ENCODE measurements at regions of chr6 and their contacts with region 1.

Region 1: DNA sequence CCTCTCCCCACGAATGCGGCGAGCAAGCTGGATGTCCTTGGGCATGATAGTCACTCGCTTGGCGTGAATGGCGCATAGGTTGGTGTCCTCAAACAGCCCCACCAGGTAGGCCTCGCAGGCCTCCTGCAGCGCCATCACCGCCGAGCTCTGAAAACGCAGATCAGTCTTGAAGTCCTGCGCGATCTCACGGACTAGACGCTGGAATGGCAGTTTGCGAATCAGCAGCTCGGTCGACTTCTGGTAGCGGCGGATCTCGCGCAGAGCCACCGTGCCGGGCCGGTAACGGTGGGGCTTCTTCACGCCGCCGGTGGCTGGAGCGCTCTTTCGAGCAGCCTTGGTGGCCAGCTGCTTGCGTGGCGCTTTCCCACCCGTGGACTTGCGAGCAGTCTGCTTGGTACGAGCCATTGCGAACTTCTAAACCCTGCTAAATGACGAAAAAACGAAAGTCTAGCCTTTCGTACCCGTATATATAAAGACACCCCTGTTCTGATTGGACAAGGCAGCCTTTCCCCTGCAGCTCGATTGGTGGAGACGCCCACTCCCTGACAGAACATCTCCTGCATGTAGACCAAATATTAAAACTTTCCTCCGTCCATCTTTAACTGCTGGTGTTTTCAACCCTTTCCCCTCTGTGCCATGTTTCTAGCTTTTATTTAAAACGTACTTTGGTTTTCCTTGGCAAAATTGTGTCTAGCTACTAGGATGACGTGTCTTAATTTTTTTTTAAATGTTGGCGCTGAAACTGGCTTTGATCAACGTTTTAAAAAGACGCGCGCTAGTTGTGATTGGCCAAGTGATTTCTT is 109.8 kb downstream of the HFE start:
- DNase-seq: peak; percentile 84
- H3K4me3 Mint-ChIP-seq: peak overlapping the region; percentile 97
- H3K27ac Mint-ChIP-seq: peak overlapping the region; percentile 97
- H3K4me1 Mint-ChIP-seq: peaks cover 43% of the 10 kb centered on the region
- H3K27me3 Mint-ChIP-seq: no peaks in the 10 kb centered on the region

Region 2: DNA sequence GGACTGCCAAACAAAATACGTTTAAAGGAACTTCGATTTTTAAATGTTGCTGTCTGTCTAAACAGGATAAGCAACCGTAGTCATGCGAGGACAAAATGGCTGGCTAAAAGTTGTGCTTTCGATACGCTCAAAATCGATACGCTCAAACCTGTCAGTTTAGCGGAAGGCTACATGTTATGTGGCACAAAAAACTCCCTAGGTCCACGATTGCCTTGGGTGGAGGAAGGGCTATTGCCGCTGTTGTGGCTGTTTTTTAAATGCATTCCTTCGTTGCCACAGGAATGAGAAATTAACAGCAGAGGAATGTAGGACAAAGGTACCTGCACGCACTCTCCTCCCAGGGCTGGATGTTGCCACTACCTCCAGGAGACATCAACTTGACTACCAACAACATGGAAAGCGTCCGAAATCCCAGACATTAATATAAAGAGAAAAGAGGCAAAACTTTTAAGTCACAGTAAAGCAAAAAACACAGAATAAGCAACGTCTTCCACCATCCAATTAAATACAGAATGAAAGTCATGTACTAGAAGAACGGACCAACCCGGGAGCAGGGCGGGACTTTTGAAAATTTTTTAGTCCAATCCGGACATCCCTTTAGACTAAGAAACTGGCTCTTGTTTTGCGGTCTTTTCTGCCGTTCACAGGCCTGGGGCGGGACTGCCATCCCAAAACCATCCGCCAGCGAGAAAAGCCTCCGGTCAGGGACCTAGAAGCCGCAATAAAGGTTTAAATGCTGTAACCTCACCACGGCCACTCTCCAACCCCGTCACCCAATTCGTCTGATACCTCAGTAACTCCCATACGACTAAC is 142.0 kb before region 1 on chr6:
- intact Hi-C with region 1: loop called (anchors 2 kb)
- DNase-seq: peak; percentile 85
- H3K4me3 Mint-ChIP-seq: peak overlapping the region; percentile 90
- H3K27ac Mint-ChIP-seq: peak overlapping the region; percentile 99
- H3K4me1 Mint-ChIP-seq: peaks cover 33% of the 10 kb centered on the region
- H3K27me3 Mint-ChIP-seq: no peaks in the 10 kb centered on the region

Region 3: DNA sequence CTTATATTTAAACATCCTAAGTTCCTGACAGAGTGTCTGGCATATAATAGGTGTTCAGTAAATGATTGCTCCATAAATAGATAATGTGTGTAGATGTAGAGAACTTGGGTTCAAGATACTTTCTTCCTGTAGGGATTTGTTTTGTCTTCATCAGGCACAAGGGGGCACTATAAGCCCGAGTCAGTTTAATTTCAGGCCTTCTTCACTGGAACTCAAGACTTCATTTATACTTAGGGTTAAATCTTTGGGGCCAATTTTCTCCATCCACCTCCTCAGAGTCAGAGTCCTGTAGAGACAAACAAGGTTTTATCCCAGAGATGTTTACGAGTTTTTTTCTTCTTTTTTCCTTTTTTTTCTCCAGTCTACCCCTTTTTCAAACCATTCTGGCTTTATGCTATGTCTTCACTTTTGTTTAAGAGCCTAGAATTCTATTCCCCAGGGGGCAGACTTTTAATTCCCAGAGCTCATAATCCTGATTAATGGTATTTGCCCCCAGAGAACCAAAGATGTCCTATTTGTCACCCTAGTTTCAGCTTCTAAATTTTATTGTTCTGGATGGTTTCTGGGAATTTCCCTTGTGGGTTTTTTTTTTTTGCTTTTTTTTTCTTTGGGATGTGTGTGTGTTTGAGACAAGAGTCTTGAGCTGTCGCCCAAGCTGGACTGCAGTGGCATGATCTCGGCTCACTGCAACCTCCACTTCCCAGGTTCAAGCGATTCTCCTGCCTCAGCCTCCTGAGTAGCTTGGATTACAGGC is 21.4 kb before region 1 on chr6:
- intact Hi-C with region 1: loop called (anchors 1 kb)
- DNase-seq: peak; percentile 52
- H3K4me3 Mint-ChIP-seq: peak overlapping the region; percentile 56
- H3K27ac Mint-ChIP-seq: peak overlapping the region; percentile 63
- H3K4me1 Mint-ChIP-seq: peaks cover 45% of the 10 kb centered on the region
- H3K27me3 Mint-ChIP-seq: no peaks in the 10 kb centered on the region

Region 4: GRCh38 chr6:26216356-26216885 is 19.4 kb after region 1 on chr6:
- intact Hi-C with region 1: loop called (anchors 1 kb)
- DNase-seq: peak; percentile 87
- H3K4me3 Mint-ChIP-seq: no peak overlapping the region
- H3K27ac Mint-ChIP-seq: no peak overlapping the region
- H3K4me1 Mint-ChIP-seq: peaks cover 24% of the 10 kb centered on the region
- H3K27me3 Mint-ChIP-seq: no peaks in the 10 kb centered on the region

Region 5: DNA sequence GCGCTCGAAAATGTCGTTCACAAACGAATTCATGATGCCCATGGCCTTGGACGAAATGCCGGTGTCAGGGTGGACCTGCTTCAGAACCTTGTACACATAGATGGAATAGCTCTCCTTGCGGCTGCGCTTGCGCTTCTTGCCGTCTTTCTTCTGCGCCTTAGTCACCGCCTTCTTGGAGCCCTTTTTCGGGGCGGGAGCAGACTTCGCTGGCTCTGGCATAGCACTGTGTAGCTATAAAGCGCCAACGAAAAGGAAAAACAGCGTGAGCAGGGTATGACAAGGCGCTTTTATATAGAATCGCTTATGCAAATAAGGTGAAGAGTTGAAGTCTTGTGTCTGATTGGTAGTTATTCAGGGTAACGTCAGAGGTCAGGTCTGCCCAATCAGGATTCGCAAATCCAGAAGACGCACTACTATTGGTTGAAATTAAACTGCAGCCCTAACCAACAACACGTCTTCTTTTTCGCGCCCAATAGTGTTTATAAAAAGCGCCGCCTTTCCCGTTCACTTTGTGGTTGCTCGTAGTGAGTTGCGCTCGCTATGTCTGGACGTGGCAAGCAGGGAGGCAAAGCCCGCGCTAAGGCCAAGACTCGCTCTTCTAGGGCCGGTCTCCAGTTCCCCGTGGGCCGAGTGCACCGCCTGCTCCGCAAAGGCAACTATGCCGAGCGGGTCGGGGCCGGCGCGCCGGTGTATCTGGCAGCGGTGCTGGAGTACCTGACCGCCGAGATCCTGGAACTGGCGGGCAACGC is 935.7 kb after region 1 on chr6:
- intact Hi-C with region 1: loop called (anchors 5 kb)
- DNase-seq: peak; percentile 95
- H3K4me3 Mint-ChIP-seq: no peak overlapping the region
- H3K27ac Mint-ChIP-seq: no peak overlapping the region
- H3K4me1 Mint-ChIP-seq: peaks cover 38% of the 10 kb centered on the region
- H3K27me3 Mint-ChIP-seq: no peaks in the 10 kb centered on the region

Region 6: DNA sequence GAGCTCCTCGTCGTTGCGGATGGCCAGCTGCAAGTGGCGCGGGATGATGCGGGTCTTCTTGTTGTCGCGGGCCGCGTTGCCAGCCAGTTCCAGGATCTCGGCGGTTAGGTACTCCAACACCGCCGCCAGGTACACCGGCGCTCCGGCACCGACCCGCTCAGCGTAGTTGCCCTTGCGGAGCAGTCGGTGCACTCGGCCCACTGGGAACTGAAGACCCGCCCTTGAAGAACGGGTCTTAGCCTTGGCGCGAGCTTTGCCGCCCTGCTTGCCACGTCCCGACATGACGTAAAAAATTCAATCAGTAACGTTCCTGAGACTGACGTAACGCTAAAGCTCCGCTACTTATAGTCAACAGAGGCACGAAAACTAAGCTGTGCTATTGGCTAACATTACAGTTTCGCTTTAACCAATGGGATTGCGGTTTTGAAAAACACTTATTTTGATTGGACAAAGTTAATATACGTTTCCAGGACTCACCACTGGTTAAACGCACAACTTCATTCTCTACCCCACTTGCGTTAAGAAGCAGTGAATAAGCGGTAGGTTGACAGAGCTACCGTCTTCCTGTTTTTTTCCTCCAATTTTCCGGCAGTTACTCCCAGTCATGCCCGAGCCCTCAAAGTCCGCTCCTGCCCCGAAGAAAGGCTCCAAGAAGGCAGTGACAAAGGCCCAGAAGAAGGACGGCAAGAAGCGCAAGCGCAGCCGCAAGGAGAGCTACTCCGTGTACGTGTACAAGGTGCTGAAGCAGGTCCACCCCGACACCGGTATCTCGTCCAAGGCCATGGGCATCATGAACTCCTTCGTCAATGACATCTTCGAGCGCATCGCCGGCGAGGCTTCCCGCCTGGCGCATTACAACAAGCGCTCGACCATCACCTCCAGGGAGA is 1641.3 kb after region 1 on chr6:
- intact Hi-C with region 1: loop called (anchors 10 kb)
- DNase-seq: peak; percentile 85
- H3K4me3 Mint-ChIP-seq: no peak overlapping the region
- H3K27ac Mint-ChIP-seq: no peak overlapping the region
- H3K4me1 Mint-ChIP-seq: peaks cover 28% of the 10 kb centered on the region
- H3K27me3 Mint-ChIP-seq: no peaks in the 10 kb centered on the region